ENCODE measurements at regions of chr2 and their contacts with region 1.

Region 1: GRCh38 chr2:138589663-138590062 is 88.1 kb downstream of the SPOPL start:
- DNase-seq: no peak
- H3K4me3 Mint-ChIP-seq: no peak overlapping the region
- H3K27ac Mint-ChIP-seq: no peak overlapping the region
- H3K4me1 Mint-ChIP-seq: peaks cover 14% of the 10 kb centered on the region
- H3K27me3 Mint-ChIP-seq: no peaks in the 10 kb centered on the region
- CTCF ChIP-seq: no peak

Region 2: GRCh38 chr2:138395565-138396306 is 193.9 kb before region 1 on chr2:
- CTCF ChIA-PET with region 1: interaction called, 14 read pairs
- intact Hi-C with region 1: no loop called
- DNase-seq: no peak
- H3K4me3 Mint-ChIP-seq: no peak overlapping the region
- H3K27ac Mint-ChIP-seq: peak overlapping the region; percentile 71
- H3K4me1 Mint-ChIP-seq: peaks cover 37% of the 10 kb centered on the region
- H3K27me3 Mint-ChIP-seq: no peaks in the 10 kb centered on the region
- CTCF ChIP-seq: no peak

Measured in Calu3 (cell line).